Right ventricle myocardium inferior (tissue), 1 donor: ENCODE measurements at regions of chr1 and their contacts with region 1.

Region 1: DNA sequence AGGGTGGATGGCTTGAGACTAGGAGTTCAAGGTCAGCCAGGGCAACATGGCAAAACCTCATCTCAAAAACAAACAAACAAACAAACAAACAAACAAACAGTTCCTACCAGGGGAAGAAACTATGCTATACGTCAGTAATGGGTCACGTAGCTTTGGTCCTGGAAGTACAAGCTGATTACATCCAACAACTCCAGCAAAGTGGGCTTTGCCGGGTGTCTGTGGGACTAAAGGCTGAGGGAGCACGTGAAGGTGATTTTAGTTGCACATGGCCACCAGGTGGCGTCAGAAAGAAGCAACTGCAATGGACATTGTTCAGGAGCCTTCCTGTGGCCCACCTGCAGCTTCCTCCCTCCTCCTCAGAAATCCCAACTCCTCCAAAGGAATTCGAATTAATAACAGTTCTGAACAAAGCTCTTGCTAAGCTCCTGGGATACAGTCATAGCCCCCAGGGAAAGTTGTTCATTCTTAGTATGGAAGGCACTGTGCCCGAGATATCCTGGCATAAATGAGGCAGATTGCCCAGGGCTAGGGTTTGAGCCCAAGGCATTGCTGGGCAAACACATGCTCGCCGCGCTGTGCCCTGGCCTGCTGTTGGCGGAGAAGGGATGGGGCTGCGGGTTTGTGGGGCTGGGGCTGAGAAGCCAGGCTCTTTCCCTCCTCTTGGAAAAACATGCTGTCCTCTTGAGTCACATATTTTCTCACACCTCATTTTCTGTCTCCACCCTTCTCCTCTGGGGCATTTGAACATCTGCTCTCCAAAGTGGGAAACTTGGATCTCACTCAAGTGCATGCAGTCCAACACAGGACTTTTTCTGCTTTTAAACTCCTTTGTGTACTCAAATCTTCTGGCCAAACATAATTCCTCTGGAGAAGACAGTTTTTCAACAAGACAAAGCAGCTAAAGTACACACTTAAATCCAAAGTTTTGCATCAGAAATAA is 28.6 kb downstream of the AKNAD1 start:
- DNase-seq: peak; percentile 84
- ATAC-seq: peak; percentile 78

Region 2: GRCh38 chr1:108627256-108627655 is 201.0 kb before region 1 on chr1:
- intact Hi-C with region 1: no loop called
- DNase-seq: no peak
- ATAC-seq: no peak

Region 3: DNA sequence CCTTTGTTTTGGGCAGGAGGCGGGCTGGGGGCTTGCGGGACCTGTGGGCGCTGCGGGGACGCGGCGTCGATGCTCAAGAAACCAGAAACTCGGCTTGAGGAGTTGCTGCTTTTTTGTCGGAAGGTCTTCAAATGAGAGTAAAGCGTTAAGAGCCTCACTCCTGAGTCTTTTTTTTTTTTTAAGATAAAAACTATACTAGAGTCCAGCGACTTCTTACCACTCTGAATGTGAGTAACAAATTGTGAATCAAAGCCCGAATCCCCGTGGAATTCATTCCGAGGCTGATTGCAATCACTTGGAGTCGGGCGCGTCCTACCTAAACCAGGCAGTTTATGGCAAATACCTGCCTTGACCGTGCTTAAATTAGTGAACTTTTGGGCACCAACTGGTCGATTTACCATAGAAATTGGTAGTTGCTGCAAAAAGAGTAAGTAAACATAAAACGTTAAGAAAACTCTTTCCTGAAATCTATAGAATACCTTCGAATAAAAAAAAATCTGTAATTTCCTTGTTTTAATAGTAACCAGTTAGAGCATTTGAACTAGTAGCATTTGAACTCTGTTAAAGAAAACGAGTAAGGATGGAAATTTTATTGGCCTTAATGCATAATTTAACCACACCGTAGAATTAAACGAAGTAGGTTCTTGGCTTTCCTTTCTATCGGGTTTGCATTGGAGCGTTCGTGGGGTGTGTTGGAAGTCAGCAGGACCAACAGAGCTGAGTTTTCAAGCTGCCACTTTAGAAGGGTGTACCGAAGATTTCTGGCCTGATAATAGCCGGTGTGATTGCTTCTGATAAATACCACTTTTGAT is 49.3 kb after region 1 on chr1:
- intact Hi-C with region 1: loop called (anchors 5 kb)
- DNase-seq: no peak
- ATAC-seq: no peak

Region 4: DNA sequence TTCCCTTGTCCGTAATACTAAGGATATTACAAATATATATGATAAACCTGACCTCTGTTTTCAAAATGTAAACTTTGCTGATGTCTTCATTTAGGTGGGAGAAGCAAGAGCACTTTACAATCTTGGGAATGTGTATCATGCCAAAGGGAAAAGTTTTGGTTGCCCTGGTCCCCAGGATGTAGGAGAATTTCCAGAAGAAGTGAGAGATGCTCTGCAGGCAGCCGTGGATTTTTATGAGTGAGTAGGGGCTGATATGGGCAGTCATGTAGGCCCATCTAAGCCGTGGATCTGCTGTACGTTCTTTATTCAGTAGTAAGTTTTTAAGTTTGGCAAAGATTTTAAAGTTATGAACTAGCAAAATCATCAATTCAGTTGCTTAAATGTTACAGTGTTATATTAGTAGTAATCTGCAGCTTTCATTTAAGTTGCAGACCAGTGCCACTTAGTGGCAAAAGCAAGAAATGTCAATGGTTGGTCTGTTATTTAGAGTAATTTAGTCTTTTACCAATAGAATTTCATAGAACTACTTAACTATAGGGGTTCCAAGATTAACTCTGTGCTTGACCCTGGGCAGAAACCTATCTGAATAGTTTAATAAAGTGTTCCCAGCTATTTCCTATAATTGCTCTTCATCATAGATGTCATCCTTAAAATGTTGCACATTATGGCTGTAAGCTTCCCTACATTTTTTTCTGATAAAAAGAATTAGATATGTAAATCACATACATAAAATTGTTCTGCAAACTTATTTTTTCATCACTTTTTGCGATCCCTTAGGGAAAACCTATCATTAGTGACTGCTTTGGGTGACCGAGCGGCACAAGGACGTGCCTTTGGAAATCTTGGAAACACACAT is 69.8 kb after region 1 on chr1:
- intact Hi-C with region 1: loop called (anchors 1 kb)
- DNase-seq: no peak
- ATAC-seq: peak; percentile 68